ENCODE measurements at regions of chr17 and their contacts with region 1.

Region 1: DNA sequence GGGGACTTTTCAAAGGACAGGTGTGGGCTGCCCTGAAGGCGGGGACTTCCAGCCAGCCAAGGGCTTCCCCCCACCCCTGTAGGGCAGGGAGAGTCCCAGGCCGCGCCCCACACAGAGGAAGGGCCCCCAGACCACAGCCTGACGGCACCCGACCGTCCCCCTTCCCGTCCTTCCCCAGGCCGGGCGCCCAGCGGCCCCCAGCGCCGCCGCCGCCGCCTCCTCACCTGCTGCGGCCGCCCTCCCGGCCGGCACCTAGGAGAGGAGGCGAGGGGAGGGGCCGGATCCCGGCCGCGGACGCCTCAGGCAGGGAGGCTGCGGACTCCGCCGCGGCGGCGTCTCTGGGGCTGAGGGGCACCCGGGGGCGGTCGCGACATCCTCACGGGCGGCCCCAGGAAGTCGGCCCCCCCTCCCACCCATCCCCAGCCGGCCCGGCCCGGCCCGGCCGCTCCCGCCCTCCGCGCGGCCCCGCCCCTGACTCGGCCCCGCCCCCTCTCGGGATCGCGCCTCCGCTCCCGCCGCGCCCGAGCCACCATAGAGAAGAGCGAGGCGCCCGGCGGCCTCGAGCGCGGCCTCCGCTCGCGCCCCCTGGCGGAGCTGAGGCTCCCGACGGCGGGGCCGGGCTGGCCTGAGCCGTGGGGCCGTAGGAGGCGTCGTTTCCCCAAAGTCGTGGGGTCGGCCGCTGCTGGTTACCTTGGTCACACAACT is 25.5 kb upstream of the RFFL start:
- DNase-seq: no peak
- H3K4me3 ChIP-seq: peak overlapping the region; percentile 94 to 96
- H3K27ac ChIP-seq: peak overlapping the region; percentile 97
- H3K4me1 ChIP-seq: peaks cover 35% of the 10 kb centered on the region
- H3K27me3 ChIP-seq: no peaks in the 10 kb centered on the region
- CTCF ChIP-seq: peak; percentile 55 to 78 (median 76)
- POLR2A ChIP-seq: no peak

Region 2: GRCh38 chr17:34930283-34930682 is 158.8 kb before region 1 on chr17:
- intact Hi-C with region 1: no loop called
- DNase-seq: no peak
- H3K4me3 ChIP-seq: no peak overlapping the region
- H3K27ac ChIP-seq: no peak overlapping the region
- H3K4me1 ChIP-seq: no peaks in the 10 kb centered on the region
- H3K27me3 ChIP-seq: no peaks in the 10 kb centered on the region
- CTCF ChIP-seq: no peak
- POLR2A ChIP-seq: no peak

Region 3: DNA sequence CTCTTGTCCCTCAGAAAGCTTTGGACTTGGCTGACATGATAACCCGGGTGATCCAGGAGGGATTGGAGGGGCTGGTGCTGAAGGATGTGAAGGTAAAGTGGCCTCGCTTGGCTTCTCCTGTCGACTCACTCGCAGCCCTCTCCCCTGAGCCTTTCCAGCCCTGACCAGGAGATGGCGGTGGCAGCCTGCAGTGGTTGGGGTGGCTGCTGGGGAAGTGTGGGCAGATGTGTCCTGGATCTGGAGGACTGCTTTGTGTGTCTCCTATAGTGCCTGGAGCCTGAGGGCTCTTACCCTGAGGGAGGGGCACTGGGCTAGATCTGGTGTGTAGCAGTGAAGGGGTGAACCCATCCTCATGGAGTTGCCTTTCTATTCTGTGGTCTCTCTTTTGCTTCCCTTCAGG is 90.8 kb before region 1 on chr17:
- intact Hi-C with region 1: no loop called
- DNase-seq: no peak
- H3K4me3 ChIP-seq: no peak overlapping the region
- H3K27ac ChIP-seq: peak overlapping the region; percentile 53
- H3K4me1 ChIP-seq: peaks cover 19% of the 10 kb centered on the region
- H3K27me3 ChIP-seq: no peaks in the 10 kb centered on the region
- CTCF ChIP-seq: peak; percentile 40 to 69 (median 53)
- POLR2A ChIP-seq: no peak

Region 4: GRCh38 chr17:35022536-35023063 is 66.4 kb before region 1 on chr17:
- intact Hi-C with region 1: loop called (anchors 10 kb)
- DNase-seq: no peak
- H3K4me3 ChIP-seq: no peak overlapping the region
- H3K27ac ChIP-seq: peak overlapping the region; percentile 64
- H3K4me1 ChIP-seq: peaks cover 37% of the 10 kb centered on the region
- H3K27me3 ChIP-seq: no peaks in the 10 kb centered on the region
- CTCF ChIP-seq: no peak
- POLR2A ChIP-seq: no peak

Region 5: DNA sequence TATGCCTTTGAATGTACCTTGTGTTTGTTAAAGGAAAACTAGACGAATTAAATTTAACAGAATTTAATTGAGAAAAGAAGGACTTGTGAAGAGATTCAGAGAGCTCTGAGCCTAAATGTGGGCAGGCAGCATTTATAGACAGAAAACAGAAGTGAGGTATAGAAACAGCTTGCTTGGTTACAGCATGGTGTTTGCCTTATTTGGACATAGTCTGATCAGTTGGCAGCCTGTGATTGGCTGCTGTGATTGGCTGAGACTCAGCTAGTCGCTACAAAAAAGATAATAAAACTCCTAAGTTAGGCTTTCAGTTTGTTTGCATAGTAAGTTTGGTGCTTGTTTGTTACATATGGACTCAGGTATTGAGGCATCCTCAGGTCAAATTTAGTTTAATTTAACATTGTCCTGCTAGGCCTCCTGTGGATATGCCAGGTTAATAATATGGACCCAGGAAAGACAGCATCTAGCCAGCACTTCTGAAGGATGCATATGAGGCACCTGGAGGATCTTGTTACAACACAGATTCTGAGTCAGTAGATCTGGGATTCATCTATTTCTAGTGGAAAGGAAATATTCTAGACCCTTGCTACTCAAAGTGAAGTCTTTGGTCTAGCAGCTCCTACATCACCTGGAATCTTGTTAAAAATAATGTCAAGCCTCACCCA is 197.2 kb after region 1 on chr17:
- intact Hi-C with region 1: no loop called
- DNase-seq: no peak
- H3K4me3 ChIP-seq: no peak overlapping the region
- H3K27ac ChIP-seq: no peak overlapping the region
- H3K4me1 ChIP-seq: no peaks in the 10 kb centered on the region
- H3K27me3 ChIP-seq: no peaks in the 10 kb centered on the region
- CTCF ChIP-seq: no peak
- POLR2A ChIP-seq: no peak